Dendritic cell treated with granulocyte-macrophage colony-stimulating factor and Interleukin-4, amounts not matched to agents 40 ng/mL and 50 ng/mL, for 4 days (primary cell): ENCODE measurements at regions of chr6 and their contacts with region 1.

Region 1: GRCh38 chr6:149082286-149082707 is 235.2 kb upstream of the TAB2 start:
- H3K4me3 Mint-ChIP-seq: no peak overlapping the region
- H3K27ac Mint-ChIP-seq: no peak overlapping the region
- H3K4me1 Mint-ChIP-seq: peaks cover 33% of the 10 kb centered on the region
- H3K27me3 Mint-ChIP-seq: no peaks in the 10 kb centered on the region

Region 2: GRCh38 chr6:149028767-149029405 is 53.4 kb before region 1 on chr6:
- intact Hi-C with region 1: loop called (anchors 5 kb)
- H3K4me3 Mint-ChIP-seq: no peak overlapping the region
- H3K27ac Mint-ChIP-seq: no peak overlapping the region
- H3K4me1 Mint-ChIP-seq: peaks cover 19% of the 10 kb centered on the region
- H3K27me3 Mint-ChIP-seq: no peaks in the 10 kb centered on the region

Region 3: GRCh38 chr6:149235130-149235561 is 152.8 kb after region 1 on chr6:
- intact Hi-C with region 1: loop called (anchors 5 kb)
- H3K4me3 Mint-ChIP-seq: no peak overlapping the region
- H3K27ac Mint-ChIP-seq: peak overlapping the region; percentile 68
- H3K4me1 Mint-ChIP-seq: peaks cover 63% of the 10 kb centered on the region
- H3K27me3 Mint-ChIP-seq: no peaks in the 10 kb centered on the region

Region 4: GRCh38 chr6:149324428-149324827 is 242.1 kb after region 1 on chr6:
- intact Hi-C with region 1: loop called (anchors 5 kb)
- H3K4me3 Mint-ChIP-seq: no peak overlapping the region
- H3K27ac Mint-ChIP-seq: peak overlapping the region; percentile 30
- H3K4me1 Mint-ChIP-seq: peaks cover 47% of the 10 kb centered on the region
- H3K27me3 Mint-ChIP-seq: no peaks in the 10 kb centered on the region

Region 5: GRCh38 chr6:149431905-149432775 is 349.8 kb after region 1 on chr6:
- intact Hi-C with region 1: loop called (anchors 1 kb)
- H3K4me3 Mint-ChIP-seq: no peak overlapping the region
- H3K27ac Mint-ChIP-seq: no peak overlapping the region
- H3K4me1 Mint-ChIP-seq: peaks cover 15% of the 10 kb centered on the region
- H3K27me3 Mint-ChIP-seq: no peaks in the 10 kb centered on the region